ENCODE measurements at regions of chrX and their contacts with region 1.

Region 1: DNA sequence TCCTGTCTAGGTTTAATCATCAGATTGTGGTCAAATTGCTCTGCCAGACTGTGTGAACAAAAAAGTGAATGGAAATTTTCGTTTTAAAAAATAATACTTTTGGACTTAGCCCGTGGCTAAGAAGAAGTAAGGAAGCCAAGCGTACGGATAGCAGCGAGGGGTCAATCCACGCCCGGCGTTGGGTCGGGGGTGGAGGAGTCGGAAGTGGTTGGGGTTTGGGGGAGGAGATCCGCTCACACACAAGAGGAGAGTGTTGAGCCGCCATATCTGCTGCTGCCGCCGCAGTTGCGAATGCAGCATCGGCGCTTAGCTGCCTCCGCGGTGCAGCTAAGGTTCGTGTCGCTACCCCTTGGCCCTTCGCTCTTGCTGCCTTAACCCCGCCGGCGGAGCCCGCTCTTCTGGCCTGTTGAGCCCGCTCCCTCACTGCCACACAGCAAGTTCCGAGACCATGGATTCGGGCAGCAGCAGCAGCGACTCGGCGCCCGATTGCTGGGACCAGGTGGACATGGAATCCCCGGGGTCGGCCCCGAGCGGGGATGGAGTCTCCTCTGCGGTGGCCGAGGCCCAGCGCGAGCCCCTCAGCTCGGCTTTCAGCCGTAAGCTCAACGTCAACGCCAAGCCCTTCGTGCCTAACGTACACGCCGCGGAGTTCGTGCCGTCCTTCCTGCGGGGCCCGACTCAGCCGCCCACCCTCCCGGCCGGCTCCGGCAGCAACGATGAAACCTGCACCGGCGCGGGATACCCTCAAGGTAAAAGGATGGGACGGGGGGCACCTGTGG is at the start of gene GSPT2:
- DNase-seq: peak; percentile 34
- ATAC-seq: peak; percentile 97
- H3K4me3 Mint-ChIP-seq: peak within 1 kb of the TSS; percentile 88
- H3K27ac Mint-ChIP-seq: peak within 1 kb of the TSS; percentile 79
- H3K4me1 Mint-ChIP-seq: peaks cover 20% of the 10 kb centered on the region
- H3K27me3 Mint-ChIP-seq: peaks cover 2% of the 10 kb centered on the region
- CTCF ChIP-seq: no peak
- total RNA-seq, gene GSPT2: 12.9 and 13.9 TPM in 2 replicates

Region 2: GRCh38 chrX:51892921-51893745 is 149.8 kb after region 1 on chrX and contains the start of gene MAGED1:
- CTCF ChIA-PET with region 1: no interaction called
- POLR2A ChIA-PET with region 1: no interaction called
- intact Hi-C with region 1: loop called (anchors 1 kb)
- DNase-seq: peak; percentile 58
- ATAC-seq: peak; percentile 88
- H3K4me3 Mint-ChIP-seq: peak within 1 kb of the TSS; percentile 92
- H3K27ac Mint-ChIP-seq: peak within 1 kb of the TSS; percentile 87
- H3K4me1 Mint-ChIP-seq: peaks cover 30% of the 10 kb centered on the region
- H3K27me3 Mint-ChIP-seq: no peaks in the 10 kb centered on the region
- CTCF ChIP-seq: no peak
- total RNA-seq, gene MAGED1: 28.9 and 32.2 TPM in 2 replicates

Measured in activated B cell treated with CpG ODN at 0.5 μM for 24 hours (primary cell).